Vagina (tissue), 2 donors: ENCODE measurements at regions of chr14 and their contacts with region 1.

Region 1: GRCh38 chr14:55160989-55161388 is 30.4 kb downstream of the DLGAP5 start:
- DNase-seq: no peak
- H3K4me3 ChIP-seq: no peak overlapping the region
- H3K27ac ChIP-seq: no peak overlapping the region
- H3K4me1 ChIP-seq: no peaks in the 10 kb centered on the region
- H3K27me3 ChIP-seq: no peaks in the 10 kb centered on the region
- CTCF ChIP-seq: peak; percentile 43 to 67 (median 66)
- POLR2A ChIP-seq: no peak

Region 2: DNA sequence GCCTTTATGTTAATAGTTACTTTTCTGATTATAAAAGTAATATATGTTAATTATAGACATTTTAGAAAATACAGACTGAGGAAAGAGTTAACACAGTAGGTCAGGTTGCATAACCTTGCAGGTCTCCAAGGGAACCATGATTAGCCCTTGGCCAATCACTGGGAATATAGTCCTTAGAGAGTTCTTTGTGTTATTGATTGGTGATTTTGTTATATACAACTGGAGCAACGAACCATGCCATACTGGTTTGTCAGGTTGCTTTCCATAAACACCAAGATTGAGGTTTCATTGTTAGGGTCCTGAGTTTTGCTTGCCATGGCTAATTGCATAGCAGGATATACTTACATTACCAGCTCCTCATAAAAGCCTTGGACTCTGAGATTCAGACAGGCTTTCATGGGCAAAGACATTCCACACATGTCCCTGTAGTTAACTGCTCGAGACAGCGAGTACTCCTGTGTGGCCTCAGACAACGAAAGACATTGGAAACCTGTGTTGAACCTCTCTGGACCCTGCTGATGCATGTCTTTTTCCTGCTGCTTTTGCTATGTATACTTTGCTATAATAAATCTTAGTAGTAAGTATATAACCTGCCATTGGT is 75.8 kb before region 1 on chr14:
- intact Hi-C with region 1: loop called (anchors 5 kb)
- DNase-seq: no peak
- H3K4me3 ChIP-seq: no peak overlapping the region
- H3K27ac ChIP-seq: no peak overlapping the region
- H3K4me1 ChIP-seq: no peaks in the 10 kb centered on the region
- H3K27me3 ChIP-seq: no peaks in the 10 kb centered on the region
- CTCF ChIP-seq: no peak
- POLR2A ChIP-seq: no peak